Activated CD8-positive, alpha-beta T cell treated with anti-CD3 and anti-CD28 coated beads for 36 hours (primary cell): ENCODE measurements at regions of chr5 and their contacts with region 1.

Region 1: GRCh38 chr5:157670662-157671591 is at the start of gene C5orf52:
- DNase-seq: peak; percentile 27
- ATAC-seq: peak; percentile 40
- H3K4me3 Mint-ChIP-seq: peak within 1 kb of the TSS; percentile 80
- H3K27ac Mint-ChIP-seq: no peak within 1 kb of the TSS
- H3K4me1 Mint-ChIP-seq: peaks cover 21% of the 10 kb centered on the region
- H3K27me3 Mint-ChIP-seq: peaks cover 32% of the 10 kb centered on the region
- CTCF ChIP-seq: no peak
- total RNA-seq, gene C5orf52: not detected

Region 2: GRCh38 chr5:157611571-157612476 is 59.1 kb before region 1 on chr5:
- CTCF ChIA-PET with region 1: no interaction called
- POLR2A ChIA-PET with region 1: no interaction called
- intact Hi-C with region 1: no loop called
- DNase-seq: no peak
- ATAC-seq: no peak
- H3K4me3 Mint-ChIP-seq: no peak overlapping the region
- H3K27ac Mint-ChIP-seq: peak overlapping the region; percentile 38
- H3K4me1 Mint-ChIP-seq: peaks cover 41% of the 10 kb centered on the region
- H3K27me3 Mint-ChIP-seq: peaks cover 1% of the 10 kb centered on the region
- CTCF ChIP-seq: no peak

Region 3: GRCh38 chr5:157651623-157652549 is 19.0 kb before region 1 on chr5 and contains the start of gene SOX30:
- CTCF ChIA-PET with region 1: interaction called, 10 read pairs
- POLR2A ChIA-PET with region 1: no interaction called
- intact Hi-C with region 1: no loop called
- DNase-seq: peak; percentile 86
- ATAC-seq: peak; percentile 99
- H3K4me3 Mint-ChIP-seq: peak within 1 kb of the TSS; percentile 68
- H3K27ac Mint-ChIP-seq: peak within 1 kb of the TSS; percentile 79
- H3K4me1 Mint-ChIP-seq: peaks cover 10% of the 10 kb centered on the region
- H3K27me3 Mint-ChIP-seq: no peaks in the 10 kb centered on the region
- CTCF ChIP-seq: no peak
- total RNA-seq, gene SOX30: 0.11 to 0.16 TPM

Region 4: DNA sequence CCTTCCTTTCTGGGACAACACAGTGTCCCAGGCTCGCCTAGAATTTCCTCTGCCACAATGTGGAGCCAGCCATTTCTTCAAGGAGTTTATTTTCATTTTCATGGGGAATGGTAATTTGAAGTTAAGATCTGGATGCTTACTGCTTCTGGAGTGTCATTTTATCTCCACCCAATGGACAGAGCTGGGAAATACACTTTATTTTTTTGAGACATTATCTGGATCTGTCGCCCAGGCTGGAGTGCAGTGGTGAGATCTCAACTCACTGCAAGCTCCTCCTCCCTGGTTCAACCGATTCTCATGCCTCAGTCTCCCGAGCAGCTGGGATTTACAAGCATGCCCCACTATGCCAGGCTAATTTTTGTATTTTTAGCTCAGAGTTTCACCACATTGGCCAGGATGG is 47.6 kb after region 1 on chr5:
- CTCF ChIA-PET with region 1: interaction called, 13 read pairs
- POLR2A ChIA-PET with region 1: no interaction called
- intact Hi-C with region 1: no loop called
- DNase-seq: peak; percentile 4
- ATAC-seq: peak; percentile 86
- H3K4me3 Mint-ChIP-seq: no peak overlapping the region
- H3K27ac Mint-ChIP-seq: no peak overlapping the region
- H3K4me1 Mint-ChIP-seq: peaks cover 4% of the 10 kb centered on the region
- H3K27me3 Mint-ChIP-seq: no peaks in the 10 kb centered on the region
- CTCF ChIP-seq: peak; percentile 54